Activated naive CD4-positive, alpha-beta T cell treated with anti-CD3 and anti-CD28 coated beads, Interleukin-2, amount 10 ng/mL, durations not matched to agents 7 days and 5 days (primary cell): ENCODE measurements at regions of chr12 and their contacts with region 1.

Region 1: GRCh38 chr12:1795785-1796514 is 24.4 kb upstream of the LRTM2 start:
- DNase-seq: peak; percentile 95
- H3K4me3 Mint-ChIP-seq: peak overlapping the region; percentile 88
- H3K27ac Mint-ChIP-seq: peak overlapping the region; percentile 91
- H3K4me1 Mint-ChIP-seq: peaks cover 21% of the 10 kb centered on the region
- H3K27me3 Mint-ChIP-seq: peaks cover 15% of the 10 kb centered on the region

Region 2: DNA sequence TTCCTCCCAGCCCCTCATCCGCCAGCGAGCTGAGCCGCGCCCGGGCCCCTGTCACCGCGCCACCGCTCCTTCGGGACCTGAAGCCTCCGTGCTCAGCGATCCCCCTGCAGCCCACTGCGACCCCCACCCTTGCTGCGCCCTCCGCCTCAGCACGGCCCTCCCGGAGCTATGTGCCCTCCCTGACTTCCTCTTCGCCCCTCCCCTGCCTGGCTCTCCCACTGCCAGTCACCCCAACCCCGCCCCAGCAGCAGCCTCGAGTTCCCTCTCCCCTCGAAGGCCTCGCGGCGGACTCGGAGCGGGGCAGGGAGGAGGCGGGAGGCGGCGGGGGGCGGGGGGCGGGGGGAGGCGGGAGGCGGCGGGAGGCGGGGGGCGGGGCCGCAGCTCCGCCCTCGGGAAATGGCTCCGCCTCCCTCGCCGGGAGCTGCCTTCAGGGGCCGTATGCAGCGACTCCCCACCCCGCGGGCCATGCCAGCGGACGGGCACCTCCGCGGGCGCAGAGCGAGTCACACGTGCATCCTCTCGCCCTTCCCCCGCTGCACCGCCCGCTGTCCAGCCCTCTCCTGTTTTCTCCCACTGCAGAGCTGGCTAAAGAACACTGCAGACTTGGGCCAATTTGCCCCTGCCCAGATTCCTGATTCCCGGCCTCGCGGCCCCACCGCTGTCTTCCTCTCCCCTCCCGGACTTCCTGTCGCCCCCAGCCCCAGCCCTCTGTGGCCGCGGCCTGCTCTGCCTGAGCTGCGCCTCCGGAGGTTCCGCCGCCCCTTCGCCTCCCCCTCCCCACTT is 134.2 kb before region 1 on chr12:
- CTCF ChIA-PET with region 1: interaction called, 326 read pairs
- DNase-seq: peak; percentile 88
- H3K4me3 Mint-ChIP-seq: peak overlapping the region; percentile 69
- H3K27ac Mint-ChIP-seq: peak overlapping the region; percentile 82
- H3K4me1 Mint-ChIP-seq: peaks cover 44% of the 10 kb centered on the region
- H3K27me3 Mint-ChIP-seq: peaks cover 27% of the 10 kb centered on the region